ENCODE measurements at regions of chr14 and their contacts with region 1.

Region 1: GRCh38 chr14:95442633-95443021 is 73.8 kb downstream of the SYNE3 start:
- DNase-seq: peak; percentile 78 to 94 (median 87)
- ATAC-seq: peak; percentile 96
- H3K4me3 ChIP-seq: no peak overlapping the region
- H3K4me1 ChIP-seq: peaks cover 9% of the 10 kb centered on the region
- CTCF ChIP-seq: peak; percentile 80

Region 2: GRCh38 chr14:95527387-95528002 is 84.9 kb after region 1 on chr14:
- intact Hi-C with region 1: loop called (anchors 5 kb)
- DNase-seq: peak in 1 of 3 donors; percentile 85
- ATAC-seq: peak; percentile 49
- H3K4me3 ChIP-seq: no peak overlapping the region
- H3K4me1 ChIP-seq: peaks cover 37% of the 10 kb centered on the region
- CTCF ChIP-seq: peak; percentile 67

Region 3: GRCh38 chr14:95534299-95535225 is 91.9 kb after region 1 on chr14 and contains the start of gene GLRX5:
- intact Hi-C with region 1: loop called (anchors 5 kb)
- DNase-seq: peak; percentile 97 to 99 (median 97)
- ATAC-seq: peak; percentile 96
- H3K4me3 ChIP-seq: peak within 1 kb of the TSS; percentile 93
- H3K4me1 ChIP-seq: peaks cover 45% of the 10 kb centered on the region
- CTCF ChIP-seq: no peak
- total RNA-seq, gene GLRX5: 43.9 to 45.8 (median 45.4) TPM

Region 4: GRCh38 chr14:95993768-95994592 is 551.4 kb after region 1 on chr14:
- intact Hi-C with region 1: loop called in 1 of 2 experiments (anchors 10 kb)
- DNase-seq: peak in 1 of 3 donors; percentile 7
- ATAC-seq: no peak
- H3K4me3 ChIP-seq: no peak overlapping the region
- H3K4me1 ChIP-seq: no peaks in the 10 kb centered on the region
- CTCF ChIP-seq: peak; percentile 29